Psoas muscle (tissue), 8 donors: ENCODE measurements at regions of chr4 and their contacts with region 1.

Region 1: GRCh38 chr4:140609548-140610425 is 41.0 kb upstream of the UCP1 start:
- DNase-seq: no peak
- ATAC-seq: peak in 3 of 4 donors; percentile 48 to 67 (median 61)
- H3K4me3 ChIP-seq: no peak overlapping the region
- H3K27ac ChIP-seq: no peak overlapping the region
- H3K4me1 ChIP-seq: no peaks in the 10 kb centered on the region
- H3K27me3 ChIP-seq: no peaks in the 10 kb centered on the region
- CTCF ChIP-seq: peak; percentile 50

Region 2: GRCh38 chr4:140359562-140360427 is 250.0 kb before region 1 on chr4:
- intact Hi-C with region 1: loop called in 1 of 2 experiments (anchors 5 kb)
- DNase-seq: peak; percentile 58 to 68
- ATAC-seq: peak; percentile 68 to 91 (median 80)
- H3K4me3 ChIP-seq: no peak overlapping the region
- H3K27ac ChIP-seq: no peak overlapping the region
- H3K4me1 ChIP-seq: no peaks in the 10 kb centered on the region
- H3K27me3 ChIP-seq: no peaks in the 10 kb centered on the region
- CTCF ChIP-seq: peak; percentile 74

Region 3: DNA sequence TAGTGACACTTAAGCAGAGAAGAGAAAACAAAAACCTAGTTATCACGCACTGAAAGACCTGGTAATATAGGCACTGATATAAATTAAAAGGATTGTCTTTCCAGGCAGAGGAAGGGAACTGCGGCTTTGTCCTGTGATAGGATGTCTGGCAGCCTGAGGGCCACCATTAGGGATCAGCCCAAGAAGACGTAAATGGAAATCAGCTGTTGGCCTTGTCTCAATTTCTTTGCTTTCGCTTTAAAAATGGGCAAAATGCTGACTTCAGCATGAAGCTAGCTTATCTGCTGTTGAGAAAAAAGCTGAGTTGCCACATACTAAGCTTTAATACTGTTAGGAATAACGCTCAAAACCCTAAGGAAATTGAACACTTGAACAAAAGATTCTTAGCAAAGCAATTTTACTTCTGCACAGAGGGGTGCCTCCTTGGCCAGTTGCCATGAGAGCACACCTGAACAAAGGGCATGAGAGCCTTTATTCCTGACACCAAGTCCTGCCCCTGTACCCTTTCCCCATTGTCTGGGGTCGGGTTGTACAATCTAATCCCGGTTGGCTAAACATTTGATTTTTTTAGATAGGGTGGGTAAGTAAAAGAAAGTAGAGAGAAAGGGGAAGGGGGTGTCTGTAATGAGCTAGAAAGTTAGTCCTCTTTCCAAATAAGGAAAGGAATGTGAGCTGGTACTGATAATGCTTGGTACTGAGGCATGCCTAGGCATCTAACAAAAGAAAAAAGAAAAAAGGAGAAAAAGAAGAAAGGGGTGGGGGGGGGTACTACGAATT is 44.1 kb after region 1 on chr4:
- intact Hi-C with region 1: no loop called
- DNase-seq: no peak
- ATAC-seq: no peak
- H3K4me3 ChIP-seq: no peak overlapping the region
- H3K27ac ChIP-seq: no peak overlapping the region
- H3K4me1 ChIP-seq: no peaks in the 10 kb centered on the region
- H3K27me3 ChIP-seq: no peaks in the 10 kb centered on the region
- CTCF ChIP-seq: no peak